Activated naive CD4-positive, alpha-beta T cell treated with anti-CD3 and anti-CD28 coated beads, Interleukin-2, amount 10 ng/mL, durations not matched to agents 7 days and 5 days (primary cell): ENCODE measurements at regions of chr10 and their contacts with region 1.

Region 1: DNA sequence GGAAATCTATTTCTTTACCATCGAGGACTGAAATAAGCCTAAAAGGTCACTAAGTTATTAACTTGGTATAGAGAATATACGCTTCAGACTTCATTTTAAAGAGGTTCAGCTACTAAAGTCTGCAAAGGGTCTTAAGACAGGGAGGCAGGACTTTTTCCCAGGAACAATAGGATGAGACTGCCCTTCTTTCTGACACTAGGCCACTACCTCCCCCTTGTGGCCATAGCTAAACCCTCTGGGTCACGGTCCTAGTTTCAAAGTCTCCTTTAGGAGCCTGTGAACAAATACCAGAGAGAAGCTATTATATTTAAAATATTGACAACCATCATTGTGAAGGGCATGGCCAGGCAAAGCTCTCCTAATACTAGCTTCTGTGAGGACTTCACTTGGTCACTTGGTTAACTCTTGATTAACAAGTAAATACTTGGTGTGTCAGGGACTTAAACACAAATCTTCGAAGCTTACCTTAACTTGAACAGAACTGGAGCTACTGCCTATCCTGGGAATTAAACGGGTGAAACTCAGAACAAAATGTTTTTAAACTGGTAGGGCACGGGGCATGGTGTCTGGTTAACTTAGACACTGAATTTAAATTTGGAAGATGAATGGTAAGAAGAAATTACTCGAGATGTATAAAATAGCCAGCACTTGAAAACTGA is 75.6 kb downstream of the CCDC6 start:
- DNase-seq: peak; percentile 37
- H3K4me3 Mint-ChIP-seq: no peak overlapping the region
- H3K27ac Mint-ChIP-seq: no peak overlapping the region
- H3K4me1 Mint-ChIP-seq: peaks cover 19% of the 10 kb centered on the region
- H3K27me3 Mint-ChIP-seq: no peaks in the 10 kb centered on the region

Region 2: DNA sequence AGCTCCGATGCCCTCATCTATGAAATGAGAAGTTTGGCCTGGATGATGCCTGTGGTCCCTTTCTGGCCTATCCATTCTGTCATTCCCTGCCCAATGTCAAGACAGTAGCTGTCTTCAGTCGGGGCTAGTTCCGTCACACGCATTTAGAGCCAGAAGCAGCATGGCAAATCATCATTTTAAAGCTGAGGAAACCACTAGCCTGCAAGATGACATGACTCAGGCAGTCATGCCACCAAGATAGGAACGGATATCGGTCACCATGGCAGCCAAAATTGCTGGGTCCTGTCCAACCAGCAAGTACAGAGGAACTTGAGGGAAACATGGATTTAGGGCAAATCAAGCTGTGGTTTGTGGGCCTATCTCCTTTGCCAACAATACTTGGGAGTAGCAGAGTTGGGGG is 13.0 kb before region 1 on chr10:
- CTCF ChIA-PET with region 1: interaction called, 13 read pairs
- DNase-seq: no peak
- H3K4me3 Mint-ChIP-seq: no peak overlapping the region
- H3K27ac Mint-ChIP-seq: no peak overlapping the region
- H3K4me1 Mint-ChIP-seq: peaks cover 9% of the 10 kb centered on the region
- H3K27me3 Mint-ChIP-seq: no peaks in the 10 kb centered on the region